Common myeloid progenitor, CD34-positive (primary cell): ENCODE measurements at regions of chr17 and their contacts with region 1.

Region 1: GRCh38 chr17:64063766-64064224 is 43.4 kb upstream of the ICAM2 start:
- DNase-seq: peak; percentile 70 to 84 (median 82)
- H3K4me3 ChIP-seq: peak overlapping the region in 2 of 7 experiments; percentile 15 to 43
- H3K27ac ChIP-seq: no peak overlapping the region
- H3K4me1 ChIP-seq: peaks cover 0 to 24% (median 12%) of the 10 kb centered on the region in 4 experiments
- H3K27me3 ChIP-seq: no peaks in the 10 kb centered on the region

Region 2: GRCh38 chr17:64005734-64006167 is 58.0 kb before region 1 on chr17:
- CTCF ChIA-PET with region 1: no interaction called
- POLR2A ChIA-PET with region 1: no interaction called
- DNase-seq: peak in 2 of 3 donors; percentile 60 to 69
- H3K4me3 ChIP-seq: peak overlapping the region in 3 of 7 experiments; percentile 11 to 51 (median 12)
- H3K27ac ChIP-seq: peak overlapping the region; percentile 42 to 80
- H3K4me1 ChIP-seq: peaks cover 0 to 51% (median 45%) of the 10 kb centered on the region in 4 experiments
- H3K27me3 ChIP-seq: no peaks in the 10 kb centered on the region

Region 3: GRCh38 chr17:64051153-64051552 is 12.6 kb before region 1 on chr17:
- CTCF ChIA-PET with region 1: interaction called, 16 read pairs
- POLR2A ChIA-PET with region 1: interaction called, 3 read pairs
- DNase-seq: no peak
- H3K4me3 ChIP-seq: no peak overlapping the region
- H3K27ac ChIP-seq: no peak overlapping the region
- H3K4me1 ChIP-seq: no peaks in the 10 kb centered on the region
- H3K27me3 ChIP-seq: no peaks in the 10 kb centered on the region

Region 4: GRCh38 chr17:64081802-64082799 is 18.3 kb after region 1 on chr17:
- CTCF ChIA-PET with region 1: interaction called, 42 read pairs
- POLR2A ChIA-PET with region 1: no interaction called
- DNase-seq: peak; percentile 71 to 92 (median 88)
- H3K4me3 ChIP-seq: peak overlapping the region in 2 of 7 experiments; percentile 6 to 27
- H3K27ac ChIP-seq: peak overlapping the region in 1 of 2 experiments; percentile 71
- H3K4me1 ChIP-seq: peaks cover 14 to 34% (median 27%) of the 10 kb centered on the region in 4 experiments
- H3K27me3 ChIP-seq: no peaks in the 10 kb centered on the region

Region 5: GRCh38 chr17:64110379-64111152 is 46.8 kb after region 1 on chr17:
- CTCF ChIA-PET with region 1: interaction called, 17 read pairs
- POLR2A ChIA-PET with region 1: no interaction called
- DNase-seq: peak; percentile 34 to 59 (median 36)
- H3K4me3 ChIP-seq: no peak overlapping the region
- H3K27ac ChIP-seq: no peak overlapping the region
- H3K4me1 ChIP-seq: peaks cover 0 to 18% (median 10%) of the 10 kb centered on the region in 4 experiments
- H3K27me3 ChIP-seq: no peaks in the 10 kb centered on the region

Region 6: DNA sequence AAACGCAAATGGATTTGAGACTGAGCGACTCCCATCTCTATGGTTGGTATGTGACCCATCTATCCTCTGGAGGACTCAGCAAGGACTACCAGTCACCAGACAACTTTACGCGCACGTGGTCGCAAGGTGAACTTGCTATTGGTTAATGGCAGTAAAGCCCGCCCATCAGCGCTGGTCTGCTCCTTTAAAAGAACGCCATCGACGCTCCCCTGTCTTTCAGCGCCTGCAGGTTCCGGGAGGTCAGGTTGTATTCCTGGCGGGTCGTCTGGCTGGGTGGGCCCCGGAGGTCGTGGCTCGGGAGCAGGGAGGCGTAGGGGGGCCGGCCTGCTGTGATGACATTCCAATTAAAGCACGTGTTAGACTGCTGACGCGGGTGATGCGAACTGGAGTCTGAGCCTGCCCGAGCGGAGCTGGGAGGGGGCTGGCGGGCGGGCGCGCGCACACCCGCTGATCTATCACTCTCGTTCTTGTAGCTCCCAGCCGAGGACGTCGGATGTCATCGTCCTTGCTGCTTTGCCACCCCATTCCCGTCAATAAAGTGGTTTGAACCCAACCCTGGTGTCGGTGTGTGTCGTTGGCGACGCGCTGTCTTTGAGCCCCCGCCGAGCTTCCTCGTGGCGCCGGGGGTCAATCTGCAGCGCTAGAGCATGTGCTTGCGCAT is 82.1 kb after region 1 on chr17:
- CTCF ChIA-PET with region 1: interaction called, 12 read pairs
- POLR2A ChIA-PET with region 1: no interaction called
- DNase-seq: peak; percentile 100
- H3K4me3 ChIP-seq: peak overlapping the region; percentile 54 to 96 (median 92)
- H3K27ac ChIP-seq: peak overlapping the region; percentile 82 to 92
- H3K4me1 ChIP-seq: peaks cover 13 to 29% (median 20%) of the 10 kb centered on the region in 4 experiments
- H3K27me3 ChIP-seq: no peaks in the 10 kb centered on the region